Endothelial cell of umbilical vein (primary cell): ENCODE measurements at regions of chr4 and their contacts with region 1.

Region 1: GRCh38 chr4:42501624-42502401 is 104.5 kb downstream of the SHISA3 start:
- DNase-seq: peak; percentile 9
- H3K4me3 ChIP-seq: no peak overlapping the region
- H3K27ac ChIP-seq: no peak overlapping the region
- H3K4me1 ChIP-seq: no peaks in the 10 kb centered on the region
- H3K27me3 ChIP-seq: no peaks in the 10 kb centered on the region
- CTCF ChIP-seq: no peak
- POLR2A ChIP-seq: no peak

Region 2: DNA sequence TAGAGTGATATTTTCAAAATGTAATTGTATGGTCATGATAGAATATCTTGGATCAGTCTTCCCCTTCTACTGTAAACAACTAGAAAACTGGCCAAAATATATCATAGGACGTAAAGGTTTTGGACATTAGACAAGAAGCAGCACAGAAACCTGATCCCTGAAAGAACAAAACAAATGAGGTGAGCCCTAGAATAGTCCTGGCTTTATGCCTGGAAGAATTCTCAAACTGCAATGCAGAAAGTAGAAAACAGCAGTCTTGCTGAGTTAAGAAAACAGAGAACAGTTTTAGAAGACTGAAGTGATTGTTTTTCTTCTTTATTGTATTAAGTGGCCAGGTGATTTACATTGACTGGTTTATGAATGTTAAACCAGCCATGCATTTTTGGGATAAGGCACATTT is 1732.5 kb before region 1 on chr4:
- CTCF ChIA-PET with region 1: no interaction called
- POLR2A ChIA-PET with region 1: no interaction called
- dilution Hi-C with region 1: no loop called
- intact Hi-C with region 1: loop called (anchors 5 kb)
- DNase-seq: no peak
- H3K4me3 ChIP-seq: no peak overlapping the region
- H3K27ac ChIP-seq: no peak overlapping the region
- H3K4me1 ChIP-seq: no peaks in the 10 kb centered on the region
- H3K27me3 ChIP-seq: peaks cover 2% of the 10 kb centered on the region in 2 experiments
- CTCF ChIP-seq: no peak
- POLR2A ChIP-seq: no peak

Region 3: GRCh38 chr4:42627885-42628646 is 126.3 kb after region 1 on chr4:
- CTCF ChIA-PET with region 1: no interaction called
- POLR2A ChIA-PET with region 1: no interaction called
- dilution Hi-C with region 1: no loop called
- intact Hi-C with region 1: no loop called
- DNase-seq: no peak
- H3K4me3 ChIP-seq: no peak overlapping the region
- H3K27ac ChIP-seq: no peak overlapping the region
- H3K4me1 ChIP-seq: no peaks in the 10 kb centered on the region
- H3K27me3 ChIP-seq: no peaks in the 10 kb centered on the region
- CTCF ChIP-seq: no peak
- POLR2A ChIP-seq: no peak

Region 4: DNA sequence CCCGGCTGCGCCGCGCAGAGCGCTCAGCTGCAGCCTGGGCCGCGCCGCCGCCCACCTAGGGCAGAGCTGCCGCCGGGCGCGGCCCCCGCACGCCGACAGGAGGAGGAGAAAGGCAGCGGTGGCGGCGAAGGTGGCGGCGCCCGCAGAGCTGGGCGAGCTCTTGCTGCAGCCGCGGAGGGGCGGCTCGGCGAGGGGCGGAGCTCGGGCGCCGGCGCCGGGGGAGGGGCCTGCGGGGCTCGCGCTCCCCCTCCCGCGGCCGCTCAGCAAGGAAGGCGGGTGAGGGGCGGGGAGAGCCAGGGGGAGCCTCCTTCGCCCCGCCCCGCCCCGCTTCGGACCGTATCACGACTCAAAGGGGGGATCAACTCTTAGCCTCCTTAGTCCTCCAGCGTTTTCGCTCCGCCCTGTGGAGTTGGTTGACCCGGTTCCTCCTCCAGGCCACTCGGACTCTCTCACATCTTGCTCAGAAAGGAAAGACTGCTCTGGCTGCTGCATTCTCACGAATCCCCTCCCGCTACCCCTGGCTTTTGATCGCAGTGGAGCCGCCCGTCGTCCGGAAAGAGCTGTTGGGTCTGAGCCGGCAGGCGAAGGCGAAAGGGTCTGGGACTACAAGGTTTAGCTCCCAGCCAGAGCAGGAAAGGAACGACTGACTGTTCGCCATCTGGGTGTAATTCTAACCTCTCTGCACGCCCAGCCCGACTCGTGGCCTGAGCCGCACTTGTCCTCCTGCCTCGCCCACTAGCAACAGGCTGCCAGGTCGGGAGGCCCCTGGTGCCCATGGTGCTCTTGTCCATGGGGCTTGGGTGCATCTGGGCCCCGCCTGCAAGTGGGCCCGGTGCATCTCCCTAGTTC is 155.4 kb after region 1 on chr4 and contains the start of gene ATP8A1:
- CTCF ChIA-PET with region 1: no interaction called
- POLR2A ChIA-PET with region 1: no interaction called
- dilution Hi-C with region 1: no loop called
- intact Hi-C with region 1: no loop called
- DNase-seq: peak; percentile 89
- H3K4me3 ChIP-seq: peak within 1 kb of the TSS; percentile 12 to 48 (median 47)
- H3K27ac ChIP-seq: peak within 1 kb of the TSS; percentile 81
- H3K4me1 ChIP-seq: peaks cover 26% of the 10 kb centered on the region
- H3K27me3 ChIP-seq: peaks cover 2 to 16% of the 10 kb centered on the region in 2 experiments
- CTCF ChIP-seq: no peak
- POLR2A ChIP-seq: peak; percentile 45
- total RNA-seq, gene ATP8A1: 1.9 and 11.5 TPM in 2 replicates